ENCODE measurements at regions of chr1 and their contacts with region 1.

Region 1: DNA sequence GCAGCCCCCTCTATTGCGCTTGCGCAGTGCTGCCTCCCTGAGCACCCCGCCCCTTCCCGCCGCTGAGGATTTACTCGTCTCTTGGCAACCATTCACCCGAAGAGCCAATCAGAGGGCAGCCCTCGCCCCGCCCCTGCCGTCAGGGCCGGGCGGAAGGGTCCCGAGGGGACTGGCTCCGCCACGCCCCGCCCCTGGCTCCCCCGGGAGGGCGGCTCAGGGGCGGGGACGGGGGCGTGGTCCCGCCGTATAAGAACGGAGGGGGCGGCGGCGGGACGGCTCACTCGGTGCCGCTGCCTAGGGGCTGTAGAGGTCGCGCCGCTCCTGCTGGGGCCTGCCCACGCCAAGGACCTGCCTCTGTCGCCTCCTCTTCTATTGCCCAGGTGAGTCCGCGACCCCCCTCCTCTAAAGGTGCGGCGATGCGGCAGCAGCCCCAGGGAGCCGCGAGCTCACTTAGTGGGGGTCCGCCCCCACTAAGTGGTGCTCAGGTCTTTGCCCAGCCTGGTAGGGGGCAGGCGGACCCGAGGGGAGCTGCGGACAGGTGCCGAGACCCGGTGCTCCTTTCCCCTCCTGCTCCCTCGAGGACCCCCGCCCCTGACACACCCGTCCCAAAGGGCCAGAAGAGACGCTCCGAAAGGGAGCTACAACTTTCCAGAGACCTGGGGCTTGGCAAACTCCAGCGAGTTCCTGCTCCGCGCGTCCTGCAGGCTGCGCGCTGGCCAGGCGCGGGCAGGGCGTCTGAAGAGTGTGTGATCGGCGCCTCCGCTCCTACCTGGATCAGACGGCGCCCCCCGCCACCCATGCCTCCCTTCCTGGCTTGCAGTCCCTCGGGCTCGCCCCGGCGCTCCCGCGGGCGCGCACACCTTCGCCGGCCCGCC is at the start of gene TENT5C:
- DNase-seq: peak; percentile 96 to 99 (median 99)
- ATAC-seq: peak; percentile 91
- H3K4me3 ChIP-seq: peak within 1 kb of the TSS; percentile 91 to 93
- H3K4me3 Mint-ChIP-seq: peak within 1 kb of the TSS; percentile 100
- H3K27ac ChIP-seq: peak within 1 kb of the TSS; percentile 95
- H3K27ac Mint-ChIP-seq: peak within 1 kb of the TSS; percentile 97
- H3K4me1 ChIP-seq: peaks cover 16% of the 10 kb centered on the region
- H3K4me1 Mint-ChIP-seq: peaks cover 36% of the 10 kb centered on the region
- H3K27me3 ChIP-seq: no peaks in the 10 kb centered on the region
- H3K27me3 Mint-ChIP-seq: no peaks in the 10 kb centered on the region
- CTCF ChIP-seq: no peak
- total RNA-seq, gene TENT5C: 146 to 150 TPM

Region 2: GRCh38 chr1:116754198-116754977 is 851.6 kb before region 1 on chr1 and contains the start of gene CD2:
- CTCF ChIA-PET with region 1: no interaction called
- POLR2A ChIA-PET with region 1: no interaction called
- intact Hi-C with region 1: loop called in 1 of 2 experiments (anchors 5 kb)
- DNase-seq: peak in 6 of 9 experiments; percentile 43 to 80 (median 60)
- ATAC-seq: peak; percentile 83
- H3K4me3 ChIP-seq: peak within 1 kb of the TSS; percentile 71 to 84
- H3K4me3 Mint-ChIP-seq: peak within 1 kb of the TSS; percentile 93
- H3K27ac ChIP-seq: peak within 1 kb of the TSS; percentile 70 to 87
- H3K27ac Mint-ChIP-seq: peak within 1 kb of the TSS; percentile 99
- H3K4me1 ChIP-seq: peaks cover 23% of the 10 kb centered on the region
- H3K4me1 Mint-ChIP-seq: peaks cover 40% of the 10 kb centered on the region
- H3K27me3 ChIP-seq: no peaks in the 10 kb centered on the region
- H3K27me3 Mint-ChIP-seq: no peaks in the 10 kb centered on the region
- CTCF ChIP-seq: no peak
- total RNA-seq, gene CD2: 97.8 to 102 TPM

Region 3: DNA sequence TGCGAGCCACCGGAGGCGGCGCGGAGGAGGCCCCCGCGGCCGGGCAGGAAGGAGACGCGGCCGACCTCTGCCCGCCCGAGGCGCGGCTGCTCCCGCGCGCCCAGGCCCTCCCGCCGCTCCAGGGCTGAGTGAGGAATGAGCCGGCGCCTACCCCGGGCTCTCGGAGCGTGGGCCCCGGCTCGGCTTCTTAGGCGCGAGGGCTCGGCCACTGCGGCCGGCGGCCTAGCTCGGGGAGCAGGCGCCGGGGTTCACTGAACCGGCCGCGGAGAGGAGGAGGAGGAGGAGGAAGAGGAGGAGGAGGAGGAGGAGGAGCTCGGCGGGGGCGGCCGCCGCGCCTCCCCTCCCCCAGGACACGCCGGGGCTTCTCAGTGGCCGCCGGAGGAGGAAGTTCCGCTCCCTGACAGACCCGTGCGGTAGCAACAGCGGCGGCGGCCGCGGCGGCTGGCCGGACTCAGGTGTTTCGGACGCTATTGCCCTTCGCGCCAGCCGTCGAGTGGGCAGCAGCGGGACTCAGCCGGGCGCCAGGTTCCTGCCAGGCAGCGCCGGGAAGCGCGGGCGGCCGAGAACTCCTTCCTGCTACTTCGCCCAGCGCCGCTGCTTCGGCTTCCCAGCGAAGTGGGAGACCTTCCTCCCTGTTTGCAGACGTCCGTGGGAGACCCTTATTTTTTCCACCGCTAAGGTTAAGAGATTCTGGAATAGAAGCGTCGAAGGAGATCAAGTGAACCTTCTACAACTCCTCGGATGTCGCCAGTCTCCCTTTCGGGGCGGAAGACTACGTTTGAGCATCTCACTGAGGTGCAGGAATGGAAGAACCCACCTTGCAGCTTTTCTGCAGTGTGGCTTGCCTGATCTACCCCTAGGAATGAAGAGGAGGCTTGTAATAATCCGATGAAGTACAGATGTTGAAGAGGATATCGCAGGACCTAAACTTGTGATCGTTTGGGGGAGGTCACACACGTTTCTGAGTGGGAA is 238.7 kb before region 1 on chr1 and contains the start of gene MAN1A2:
- CTCF ChIA-PET with region 1: no interaction called
- POLR2A ChIA-PET with region 1: interaction called, 5 read pairs
- intact Hi-C with region 1: loop called (anchors 1 to 5 kb)
- DNase-seq: peak; percentile 31 to 87 (median 71)
- ATAC-seq: peak; percentile 61
- H3K4me3 ChIP-seq: peak within 1 kb of the TSS; percentile 57 to 84
- H3K4me3 Mint-ChIP-seq: peak within 1 kb of the TSS; percentile 95
- H3K27ac ChIP-seq: peak within 1 kb of the TSS; percentile 63 to 91
- H3K27ac Mint-ChIP-seq: peak within 1 kb of the TSS; percentile 97
- H3K4me1 ChIP-seq: peaks cover 52% of the 10 kb centered on the region
- H3K4me1 Mint-ChIP-seq: peaks cover 76% of the 10 kb centered on the region
- H3K27me3 ChIP-seq: no peaks in the 10 kb centered on the region
- H3K27me3 Mint-ChIP-seq: no peaks in the 10 kb centered on the region
- CTCF ChIP-seq: no peak
- total RNA-seq, gene MAN1A2: 46.5 to 49.3 TPM

Region 4: DNA sequence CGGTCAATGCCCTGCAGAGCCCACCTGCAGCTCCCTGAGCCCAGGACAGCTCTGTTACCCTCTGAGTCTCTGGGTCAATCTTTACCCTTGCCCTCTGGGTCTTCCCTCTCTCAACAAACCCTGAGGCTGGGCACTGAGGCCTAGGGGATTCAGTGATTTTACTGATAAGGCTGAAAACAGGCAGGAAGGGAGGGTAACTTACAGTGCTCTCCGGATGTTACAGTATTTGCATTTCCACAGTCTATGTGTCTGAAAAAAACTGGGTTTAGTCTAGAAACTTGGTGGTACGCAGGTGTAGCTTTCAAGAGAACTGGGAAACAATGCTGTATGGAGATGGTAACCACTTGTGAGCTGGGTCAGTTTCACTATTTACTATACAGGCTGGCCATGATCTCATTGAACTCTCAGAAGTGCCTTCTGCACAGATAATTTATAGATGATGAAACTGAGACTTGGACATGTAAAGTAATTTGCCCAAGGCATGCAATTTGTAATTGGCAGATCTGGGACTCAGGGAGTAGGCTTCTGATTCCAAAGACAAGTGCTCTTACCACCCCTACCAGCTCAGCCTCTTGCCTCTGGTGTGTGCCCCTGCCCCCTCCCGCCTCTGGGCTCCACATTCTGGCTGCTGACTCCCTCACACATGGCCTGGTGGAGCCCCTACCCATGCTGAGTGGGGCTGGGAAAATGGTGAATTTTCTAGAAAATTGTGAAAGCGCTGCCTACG is 48.6 kb after region 1 on chr1:
- CTCF ChIA-PET with region 1: interaction called, 7 read pairs
- POLR2A ChIA-PET with region 1: interaction called, 65 read pairs
- intact Hi-C with region 1: loop called (anchors 1 to 2 kb)
- DNase-seq: peak in 2 of 9 experiments; percentile 40 to 64
- ATAC-seq: peak; percentile 7
- H3K4me3 ChIP-seq: no peak overlapping the region
- H3K4me3 Mint-ChIP-seq: peak overlapping the region; percentile 40
- H3K27ac ChIP-seq: peak overlapping the region in 1 of 2 experiments; percentile 70
- H3K27ac Mint-ChIP-seq: peak overlapping the region; percentile 94
- H3K4me1 ChIP-seq: peaks cover 69% of the 10 kb centered on the region
- H3K4me1 Mint-ChIP-seq: peaks cover 83% of the 10 kb centered on the region
- H3K27me3 ChIP-seq: peaks cover 2 to 10% of the 10 kb centered on the region in 2 experiments
- H3K27me3 Mint-ChIP-seq: peaks cover 30% of the 10 kb centered on the region
- CTCF ChIP-seq: no peak

Region 5: GRCh38 chr1:117674521-117675397 is 68.7 kb after region 1 on chr1:
- CTCF ChIA-PET with region 1: interaction called, 26 read pairs
- POLR2A ChIA-PET with region 1: interaction called, 6 read pairs
- intact Hi-C with region 1: loop called (anchors 1 to 2 kb)
- DNase-seq: peak in 8 of 9 experiments; percentile 34 to 83 (median 67)
- ATAC-seq: peak; percentile 86
- H3K4me3 ChIP-seq: no peak overlapping the region
- H3K4me3 Mint-ChIP-seq: no peak overlapping the region
- H3K27ac ChIP-seq: no peak overlapping the region
- H3K27ac Mint-ChIP-seq: no peak overlapping the region
- H3K4me1 ChIP-seq: no peaks in the 10 kb centered on the region
- H3K4me1 Mint-ChIP-seq: peaks cover 6% of the 10 kb centered on the region
- H3K27me3 ChIP-seq: no peaks in the 10 kb centered on the region
- H3K27me3 Mint-ChIP-seq: peaks cover 14% of the 10 kb centered on the region
- CTCF ChIP-seq: peak; percentile 58

Region 6: GRCh38 chr1:117780687-117781475 is 174.9 kb after region 1 on chr1:
- CTCF ChIA-PET with region 1: no interaction called
- POLR2A ChIA-PET with region 1: no interaction called
- intact Hi-C with region 1: no loop called
- DNase-seq: no peak
- ATAC-seq: no peak
- H3K4me3 ChIP-seq: no peak overlapping the region
- H3K4me3 Mint-ChIP-seq: no peak overlapping the region
- H3K27ac ChIP-seq: no peak overlapping the region
- H3K27ac Mint-ChIP-seq: no peak overlapping the region
- H3K4me1 ChIP-seq: no peaks in the 10 kb centered on the region
- H3K4me1 Mint-ChIP-seq: peaks cover 5% of the 10 kb centered on the region
- H3K27me3 ChIP-seq: no peaks in the 10 kb centered on the region
- H3K27me3 Mint-ChIP-seq: peaks cover 9% of the 10 kb centered on the region
- CTCF ChIP-seq: no peak

Region 7: GRCh38 chr1:117929173-117929989 is 323.4 kb after region 1 on chr1 and contains the starts of genes GDAP2 and WDR3:
- CTCF ChIA-PET with region 1: no interaction called
- POLR2A ChIA-PET with region 1: no interaction called
- intact Hi-C with region 1: loop called in 1 of 2 experiments (anchors 2 kb)
- DNase-seq: peak; percentile 90 to 98 (median 95)
- ATAC-seq: peak; percentile 90
- H3K4me3 ChIP-seq: peak within 1 kb of the TSS; percentile 83 to 89
- H3K4me3 Mint-ChIP-seq: peak within 1 kb of the TSS; percentile 94
- H3K27ac ChIP-seq: peak within 1 kb of the TSS; percentile 83 to 94
- H3K27ac Mint-ChIP-seq: peak within 1 kb of the TSS; percentile 97
- H3K4me1 ChIP-seq: peaks cover 37% of the 10 kb centered on the region
- H3K4me1 Mint-ChIP-seq: peaks cover 63% of the 10 kb centered on the region
- H3K27me3 ChIP-seq: no peaks in the 10 kb centered on the region
- H3K27me3 Mint-ChIP-seq: no peaks in the 10 kb centered on the region
- CTCF ChIP-seq: no peak
- total RNA-seq, gene GDAP2: 24.9 to 28.0 TPM
- total RNA-seq, gene WDR3: 5.7 to 6.1 TPM